Activated CD4-positive, alpha-beta memory T cell treated with anti-CD3 and anti-CD28 coated beads, Interleukin-2, amount 10 ng/mL, durations not matched to agents 7 days and 5 days (primary cell): ENCODE measurements at regions of chr17 and their contacts with region 1.

Region 1: DNA sequence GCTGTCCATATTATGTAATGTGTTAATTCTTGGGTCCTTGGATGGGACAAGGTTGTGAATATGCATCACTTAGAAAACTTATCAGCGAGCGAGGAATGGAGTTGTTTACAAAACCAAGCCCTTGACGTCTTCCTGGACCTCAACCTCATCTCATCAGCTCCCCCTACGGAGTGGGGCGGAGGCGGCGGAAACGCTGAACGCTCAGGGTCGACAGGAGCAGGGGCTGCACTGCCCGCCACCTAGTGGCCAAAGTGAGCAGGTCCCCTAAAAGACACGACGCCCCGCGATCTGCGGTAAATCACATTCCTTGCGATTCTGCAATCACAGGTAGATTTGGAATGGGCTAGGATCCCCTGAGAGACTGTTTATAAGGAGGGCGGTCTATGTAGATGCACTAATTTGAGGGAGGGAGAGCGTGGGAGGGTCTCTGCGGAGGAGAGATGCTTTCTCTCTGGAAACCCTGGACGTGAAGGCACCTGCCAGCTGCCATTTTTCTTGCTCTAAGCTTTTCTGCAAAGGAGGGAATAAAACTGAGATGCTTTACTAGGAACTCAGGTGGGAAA is 5.4 kb upstream of the ICAM2 start:
- DNase-seq: peak; percentile 95
- H3K4me3 Mint-ChIP-seq: peak overlapping the region; percentile 73
- H3K27ac Mint-ChIP-seq: peak overlapping the region; percentile 99
- H3K4me1 Mint-ChIP-seq: peaks cover 75% of the 10 kb centered on the region
- H3K27me3 Mint-ChIP-seq: no peaks in the 10 kb centered on the region

Region 2: GRCh38 chr17:63816669-63817068 is 209.1 kb before region 1 on chr17:
- CTCF ChIA-PET with region 1: no interaction called
- POLR2A ChIA-PET with region 1: no interaction called
- DNase-seq: no peak
- H3K4me3 Mint-ChIP-seq: no peak overlapping the region
- H3K27ac Mint-ChIP-seq: no peak overlapping the region
- H3K4me1 Mint-ChIP-seq: peaks cover 9% of the 10 kb centered on the region
- H3K27me3 Mint-ChIP-seq: no peaks in the 10 kb centered on the region

Region 3: DNA sequence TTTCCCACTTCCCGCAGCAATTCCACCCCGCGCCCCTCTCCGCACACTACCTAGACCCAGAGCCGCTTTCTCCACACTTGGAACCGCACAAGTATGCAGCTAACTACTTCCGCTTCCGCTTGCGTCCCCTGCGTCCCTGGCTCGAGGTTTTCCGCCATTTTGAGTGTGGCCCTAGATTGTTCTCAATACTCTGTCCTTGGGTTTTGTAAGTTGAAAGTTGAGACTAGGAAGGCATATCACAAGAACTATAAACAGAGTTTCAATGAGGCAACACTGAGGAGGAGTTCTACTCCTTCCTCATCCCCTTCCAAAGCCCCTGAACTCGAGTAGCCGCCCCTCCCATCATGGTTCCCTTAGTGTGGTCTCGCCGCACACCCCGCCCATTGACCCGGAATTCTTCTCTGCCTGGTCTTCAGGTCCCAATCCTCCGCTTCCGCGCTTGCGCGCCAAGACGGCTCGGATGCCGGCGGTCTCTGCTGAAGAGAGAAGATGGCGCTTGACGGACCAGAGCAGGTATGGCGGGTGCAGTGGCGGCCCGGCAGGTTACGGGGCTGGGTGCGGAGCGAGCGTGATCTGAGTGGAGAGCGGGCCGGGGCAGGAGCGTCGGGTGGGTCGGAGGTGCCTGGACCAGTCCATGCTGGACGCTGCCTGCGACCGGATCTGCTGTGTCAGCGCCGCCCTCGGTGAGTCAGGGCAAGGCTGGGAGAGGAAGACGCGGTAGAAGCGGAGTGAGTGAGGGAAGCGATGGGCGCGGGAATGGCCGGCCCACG is 198.6 kb before region 1 on chr17 and contains the starts of genes FTSJ3 and PSMC5:
- CTCF ChIA-PET with region 1: no interaction called
- POLR2A ChIA-PET with region 1: no interaction called
- DNase-seq: peak; percentile 96
- H3K4me3 Mint-ChIP-seq: peak within 1 kb of the TSS; percentile 89
- H3K27ac Mint-ChIP-seq: peak within 1 kb of the TSS; percentile 93
- H3K4me1 Mint-ChIP-seq: peaks cover 82% of the 10 kb centered on the region
- H3K27me3 Mint-ChIP-seq: no peaks in the 10 kb centered on the region
- total RNA-seq, gene FTSJ3: 38.9 to 43.8 TPM
- total RNA-seq, gene PSMC5: 152 to 162 TPM

Region 4: GRCh38 chr17:63904316-63904715 is 121.5 kb before region 1 on chr17:
- CTCF ChIA-PET with region 1: interaction called, 21 read pairs
- POLR2A ChIA-PET with region 1: interaction called, 4 read pairs
- DNase-seq: no peak
- H3K4me3 Mint-ChIP-seq: no peak overlapping the region
- H3K27ac Mint-ChIP-seq: no peak overlapping the region
- H3K4me1 Mint-ChIP-seq: peaks cover 9% of the 10 kb centered on the region
- H3K27me3 Mint-ChIP-seq: peaks cover 35% of the 10 kb centered on the region

Region 5: GRCh38 chr17:63919311-63919723 is 106.5 kb before region 1 on chr17:
- CTCF ChIA-PET with region 1: interaction called, 136 read pairs
- POLR2A ChIA-PET with region 1: interaction called, 27 read pairs
- DNase-seq: peak; percentile 79
- H3K4me3 Mint-ChIP-seq: no peak overlapping the region
- H3K27ac Mint-ChIP-seq: no peak overlapping the region
- H3K4me1 Mint-ChIP-seq: peaks cover 8% of the 10 kb centered on the region
- H3K27me3 Mint-ChIP-seq: peaks cover 19% of the 10 kb centered on the region

Region 6: DNA sequence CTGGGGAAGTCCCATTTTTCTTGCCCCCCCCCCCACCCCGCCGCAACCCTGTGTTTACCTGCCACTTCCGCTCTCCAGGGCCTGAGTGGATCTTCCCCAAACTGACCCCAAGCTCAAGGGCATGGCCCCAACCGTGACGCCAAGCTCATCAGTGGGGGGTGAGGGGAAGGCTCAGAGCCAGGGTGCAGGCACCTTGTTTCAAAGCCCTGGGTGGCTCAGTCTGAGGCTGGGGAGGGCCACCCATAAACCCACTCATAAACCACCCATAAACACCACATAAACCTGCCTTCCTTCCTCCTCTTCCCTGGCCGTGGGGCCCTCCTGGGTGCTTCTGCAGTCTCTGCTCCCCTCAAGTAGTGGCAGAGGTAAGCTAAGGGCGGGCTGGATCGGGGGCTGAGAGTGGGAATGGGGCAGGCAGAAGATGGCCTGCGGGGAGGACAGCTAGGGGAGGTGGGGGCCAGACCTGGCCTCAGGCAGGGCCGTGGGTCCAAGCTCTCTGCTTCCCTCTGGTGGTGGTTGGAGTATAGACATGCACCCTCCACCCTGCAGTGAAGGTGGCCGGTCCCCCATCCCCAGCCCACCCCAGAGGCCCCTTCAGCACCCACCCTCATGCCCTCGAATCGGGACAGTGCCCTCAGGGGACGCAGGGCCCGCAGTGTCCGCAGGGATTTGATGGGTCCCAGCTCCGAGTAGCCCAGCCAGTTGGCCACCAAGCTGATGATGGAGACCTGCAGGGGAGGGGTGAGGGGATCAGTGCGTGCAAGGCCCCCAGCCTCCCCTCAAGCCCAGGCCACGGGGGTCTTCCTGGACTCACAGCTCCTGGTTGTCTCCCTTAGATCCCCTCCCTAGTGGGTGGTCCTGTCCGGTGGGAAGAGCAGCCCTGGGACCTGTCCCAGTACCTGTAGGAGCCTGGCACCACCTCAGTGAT is 79.1 kb before region 1 on chr17:
- CTCF ChIA-PET with region 1: interaction called, 22 read pairs
- POLR2A ChIA-PET with region 1: interaction called, 15 read pairs
- DNase-seq: peak; percentile 67
- H3K4me3 Mint-ChIP-seq: peak overlapping the region; percentile 37
- H3K27ac Mint-ChIP-seq: peak overlapping the region; percentile 71
- H3K4me1 Mint-ChIP-seq: peaks cover 22% of the 10 kb centered on the region
- H3K27me3 Mint-ChIP-seq: peaks cover 10% of the 10 kb centered on the region

Region 7: DNA sequence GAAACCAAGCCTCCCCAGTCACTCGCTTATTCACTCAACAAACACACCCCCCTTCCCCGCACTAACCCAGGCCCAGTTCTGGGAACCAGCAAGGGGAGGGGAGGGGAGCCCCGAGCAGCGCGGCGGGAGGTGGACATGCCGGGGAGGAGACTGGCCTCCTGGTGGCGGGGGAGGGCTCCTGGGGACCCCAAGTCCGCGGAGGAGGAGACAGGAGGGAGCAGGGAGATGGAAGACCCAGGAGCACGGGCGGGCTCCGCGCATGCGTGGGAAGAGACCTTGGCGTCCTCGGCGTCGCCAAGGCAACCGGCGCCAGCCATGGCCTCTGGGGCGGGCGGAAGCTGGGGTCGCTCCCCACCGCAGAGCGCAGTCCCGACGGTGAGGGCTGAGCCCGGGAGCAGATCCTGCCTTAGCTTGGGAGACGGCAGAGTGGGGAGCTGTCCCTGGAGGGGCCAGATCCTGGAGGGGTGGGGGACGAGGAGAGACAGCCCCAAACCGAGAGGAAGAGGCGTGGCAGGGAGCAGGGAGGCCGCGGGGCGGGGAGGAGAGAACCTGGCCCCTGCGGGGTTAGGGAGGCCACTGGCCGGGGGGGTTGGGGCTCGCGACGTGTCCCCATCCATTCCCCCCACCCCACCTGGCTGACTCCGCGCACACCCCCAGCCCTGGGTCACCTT is 27.6 kb before region 1 on chr17 and contains the start of gene PRR29:
- CTCF ChIA-PET with region 1: interaction called, 31 read pairs
- POLR2A ChIA-PET with region 1: interaction called, 79 read pairs
- DNase-seq: peak; percentile 82
- H3K4me3 Mint-ChIP-seq: peak within 1 kb of the TSS; percentile 92
- H3K27ac Mint-ChIP-seq: peak within 1 kb of the TSS; percentile 76
- H3K4me1 Mint-ChIP-seq: peaks cover 66% of the 10 kb centered on the region
- H3K27me3 Mint-ChIP-seq: peaks cover 8% of the 10 kb centered on the region
- total RNA-seq, gene PRR29: 12.0 to 15.1 TPM

Region 8: DNA sequence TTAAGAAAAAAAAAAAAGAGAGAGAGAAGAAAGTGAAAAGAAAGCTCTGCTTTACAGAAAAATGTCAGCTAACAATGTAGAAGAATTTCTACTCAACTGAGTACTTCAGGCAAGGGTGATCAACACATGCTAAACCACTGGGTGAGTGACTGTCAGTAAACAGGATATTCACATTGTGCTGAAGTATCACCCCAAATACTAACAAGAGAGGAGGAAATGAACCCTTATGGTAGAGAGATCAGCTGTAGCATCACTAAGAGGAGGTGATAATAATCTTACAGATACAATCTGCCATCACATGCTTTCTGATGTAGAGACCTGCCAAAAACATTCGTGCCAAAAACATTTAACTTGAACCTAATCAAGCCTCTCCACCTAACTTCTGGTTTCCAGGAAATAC is 25.3 kb after region 1 on chr17:
- CTCF ChIA-PET with region 1: interaction called, 36 read pairs
- POLR2A ChIA-PET with region 1: interaction called, 23 read pairs
- DNase-seq: peak; percentile 34
- H3K4me3 Mint-ChIP-seq: peak overlapping the region; percentile 18
- H3K27ac Mint-ChIP-seq: peak overlapping the region; percentile 90
- H3K4me1 Mint-ChIP-seq: peaks cover 57% of the 10 kb centered on the region
- H3K27me3 Mint-ChIP-seq: no peaks in the 10 kb centered on the region

Region 9: GRCh38 chr17:64281962-64282727 is 256.3 kb after region 1 on chr17:
- CTCF ChIA-PET with region 1: interaction called, 14 read pairs
- POLR2A ChIA-PET with region 1: interaction called, 3 read pairs
- DNase-seq: peak; percentile 55
- H3K4me3 Mint-ChIP-seq: no peak overlapping the region
- H3K27ac Mint-ChIP-seq: no peak overlapping the region
- H3K4me1 Mint-ChIP-seq: peaks cover 6% of the 10 kb centered on the region
- H3K27me3 Mint-ChIP-seq: no peaks in the 10 kb centered on the region